Activated naive CD4-positive, alpha-beta T cell treated with anti-CD3 and anti-CD28 coated beads for 36 hours (primary cell): ENCODE measurements at regions of chr16 and their contacts with region 1.

Region 1: DNA sequence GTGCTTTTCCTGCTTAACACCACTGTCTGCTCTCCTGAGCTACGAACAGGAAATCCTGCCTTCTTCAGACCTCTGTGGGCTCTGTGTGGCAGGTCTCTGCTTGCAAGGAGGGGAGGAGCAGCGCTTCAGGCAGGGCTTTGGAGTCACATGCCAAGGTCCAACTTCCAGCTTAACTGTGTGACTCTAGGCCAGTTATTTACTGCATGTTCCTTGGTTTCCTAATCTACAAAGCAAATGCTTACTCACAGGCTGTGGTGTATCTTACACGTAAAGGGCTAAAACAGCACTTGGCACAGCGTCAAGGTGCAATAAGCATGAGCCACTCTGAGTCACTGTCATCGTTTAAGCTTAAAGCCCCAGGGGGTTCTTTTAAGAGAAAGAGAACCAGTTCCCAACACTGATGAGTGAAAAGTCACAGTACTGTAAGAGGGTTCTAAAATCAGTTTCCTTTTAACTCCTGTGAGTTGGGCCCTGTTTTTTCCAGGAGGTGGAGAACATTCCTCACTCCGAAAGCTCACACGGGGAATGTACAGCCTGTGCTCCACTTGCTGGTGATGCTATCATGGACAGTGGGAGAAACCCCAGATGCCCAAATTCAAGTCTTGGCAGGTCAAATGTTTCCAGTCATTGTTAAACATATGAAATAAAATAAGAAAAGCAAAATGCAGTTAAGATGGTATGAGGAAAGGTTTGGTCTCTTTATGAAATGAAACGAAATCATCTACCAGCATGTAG is 54.1 kb upstream of the BCAR1 start:
- DNase-seq: peak; percentile 94
- H3K4me3 Mint-ChIP-seq: peak overlapping the region; percentile 36
- H3K27ac Mint-ChIP-seq: peak overlapping the region; percentile 90
- H3K4me1 Mint-ChIP-seq: peaks cover 29% of the 10 kb centered on the region
- H3K27me3 Mint-ChIP-seq: no peaks in the 10 kb centered on the region

Region 2: DNA sequence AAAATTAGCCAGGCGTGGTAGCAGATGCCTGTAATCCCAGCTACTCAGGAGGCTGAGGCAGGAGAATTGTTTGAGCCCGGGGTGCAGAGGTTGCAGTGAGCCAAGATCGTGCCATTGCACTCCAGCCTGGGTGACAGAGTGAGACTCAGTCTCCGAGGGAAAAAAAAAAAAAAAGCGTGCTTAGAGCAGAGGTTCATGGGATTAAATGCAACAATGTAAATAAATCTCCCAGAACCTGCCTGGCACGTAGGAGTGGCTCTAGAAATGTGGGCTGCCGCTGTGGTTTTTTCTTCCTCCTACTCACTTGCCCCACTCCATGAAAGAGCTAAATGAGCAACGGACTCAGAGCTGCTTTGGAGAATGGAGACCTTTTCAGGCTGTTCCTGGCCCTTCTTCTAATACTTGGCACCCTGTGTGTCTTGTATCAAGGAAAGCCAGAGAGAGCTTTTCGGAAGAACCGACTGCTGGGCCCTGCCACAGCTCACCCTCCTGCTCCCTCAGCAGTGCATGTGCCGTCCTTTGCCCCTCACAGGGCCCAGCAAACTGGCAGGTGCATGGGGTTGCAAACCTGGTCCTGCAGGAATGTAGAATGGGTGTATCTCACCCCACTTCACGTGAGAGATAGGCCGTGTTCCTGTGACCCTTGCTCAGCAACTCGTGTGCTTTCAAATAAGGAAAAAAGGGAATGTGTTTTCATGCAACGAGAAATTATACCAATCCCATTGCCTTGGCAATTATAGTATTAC is 241.0 kb before region 1 on chr16:
- CTCF ChIA-PET with region 1: no interaction called
- intact Hi-C with region 1: no loop called
- DNase-seq: peak; percentile 65
- H3K4me3 Mint-ChIP-seq: peak overlapping the region; percentile 54
- H3K27ac Mint-ChIP-seq: no peak overlapping the region
- H3K4me1 Mint-ChIP-seq: peaks cover 25% of the 10 kb centered on the region
- H3K27me3 Mint-ChIP-seq: no peaks in the 10 kb centered on the region

Region 3: GRCh38 chr16:75148311-75149195 is 157.0 kb before region 1 on chr16 and contains the start of gene ZFP1:
- CTCF ChIA-PET with region 1: no interaction called
- intact Hi-C with region 1: loop called (anchors 1 kb)
- DNase-seq: peak; percentile 97
- H3K4me3 Mint-ChIP-seq: peak within 1 kb of the TSS; percentile 80
- H3K27ac Mint-ChIP-seq: peak within 1 kb of the TSS; percentile 73
- H3K4me1 Mint-ChIP-seq: peaks cover 37% of the 10 kb centered on the region
- H3K27me3 Mint-ChIP-seq: no peaks in the 10 kb centered on the region
- total RNA-seq, gene ZFP1: 20.2 to 20.9 TPM

Region 4: DNA sequence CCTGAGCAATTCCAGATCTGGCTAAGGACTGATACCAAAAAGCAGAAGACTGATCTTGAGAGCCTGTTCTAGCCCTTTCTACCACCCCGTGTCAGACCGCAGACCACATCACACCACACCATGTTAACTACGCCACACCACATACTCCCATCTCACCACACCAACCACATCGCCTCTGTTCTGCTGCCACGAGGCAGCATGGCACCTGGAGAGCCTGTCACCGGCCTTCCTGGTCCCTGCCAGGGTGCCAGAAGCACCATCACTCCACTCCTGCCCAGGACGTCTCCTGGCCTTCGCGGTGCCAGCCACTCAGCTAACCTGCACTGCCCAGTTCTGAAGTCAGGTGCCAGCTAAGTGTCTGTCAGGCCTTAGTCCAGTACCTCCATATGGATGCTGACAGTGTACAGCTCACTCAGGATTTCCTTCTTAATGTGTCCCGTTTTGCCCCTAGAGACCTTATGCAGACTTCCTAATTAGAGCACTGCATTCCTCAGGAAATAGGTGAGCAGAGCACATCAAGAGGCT is 16.9 kb before region 1 on chr16:
- CTCF ChIA-PET with region 1: no interaction called
- intact Hi-C with region 1: loop called (anchors 1 kb)
- DNase-seq: peak; percentile 82
- H3K4me3 Mint-ChIP-seq: no peak overlapping the region
- H3K27ac Mint-ChIP-seq: no peak overlapping the region
- H3K4me1 Mint-ChIP-seq: peaks cover 17% of the 10 kb centered on the region
- H3K27me3 Mint-ChIP-seq: peaks cover 3% of the 10 kb centered on the region

Region 5: GRCh38 chr16:75402821-75403475 is 97.4 kb after region 1 on chr16:
- CTCF ChIA-PET with region 1: no interaction called
- intact Hi-C with region 1: loop called (anchors 1 kb)
- DNase-seq: no peak
- H3K4me3 Mint-ChIP-seq: no peak overlapping the region
- H3K27ac Mint-ChIP-seq: no peak overlapping the region
- H3K4me1 Mint-ChIP-seq: peaks cover 27% of the 10 kb centered on the region
- H3K27me3 Mint-ChIP-seq: no peaks in the 10 kb centered on the region

Region 6: GRCh38 chr16:75622761-75623605 is 317.5 kb after region 1 on chr16 and contains the start of gene ADAT1:
- CTCF ChIA-PET with region 1: no interaction called
- intact Hi-C with region 1: loop called (anchors 2 kb)
- DNase-seq: peak; percentile 99
- H3K4me3 Mint-ChIP-seq: peak within 1 kb of the TSS; percentile 95
- H3K27ac Mint-ChIP-seq: peak within 1 kb of the TSS; percentile 95
- H3K4me1 Mint-ChIP-seq: peaks cover 39% of the 10 kb centered on the region
- H3K27me3 Mint-ChIP-seq: no peaks in the 10 kb centered on the region
- total RNA-seq, gene ADAT1: 45.3 to 47.5 TPM

Region 7: DNA sequence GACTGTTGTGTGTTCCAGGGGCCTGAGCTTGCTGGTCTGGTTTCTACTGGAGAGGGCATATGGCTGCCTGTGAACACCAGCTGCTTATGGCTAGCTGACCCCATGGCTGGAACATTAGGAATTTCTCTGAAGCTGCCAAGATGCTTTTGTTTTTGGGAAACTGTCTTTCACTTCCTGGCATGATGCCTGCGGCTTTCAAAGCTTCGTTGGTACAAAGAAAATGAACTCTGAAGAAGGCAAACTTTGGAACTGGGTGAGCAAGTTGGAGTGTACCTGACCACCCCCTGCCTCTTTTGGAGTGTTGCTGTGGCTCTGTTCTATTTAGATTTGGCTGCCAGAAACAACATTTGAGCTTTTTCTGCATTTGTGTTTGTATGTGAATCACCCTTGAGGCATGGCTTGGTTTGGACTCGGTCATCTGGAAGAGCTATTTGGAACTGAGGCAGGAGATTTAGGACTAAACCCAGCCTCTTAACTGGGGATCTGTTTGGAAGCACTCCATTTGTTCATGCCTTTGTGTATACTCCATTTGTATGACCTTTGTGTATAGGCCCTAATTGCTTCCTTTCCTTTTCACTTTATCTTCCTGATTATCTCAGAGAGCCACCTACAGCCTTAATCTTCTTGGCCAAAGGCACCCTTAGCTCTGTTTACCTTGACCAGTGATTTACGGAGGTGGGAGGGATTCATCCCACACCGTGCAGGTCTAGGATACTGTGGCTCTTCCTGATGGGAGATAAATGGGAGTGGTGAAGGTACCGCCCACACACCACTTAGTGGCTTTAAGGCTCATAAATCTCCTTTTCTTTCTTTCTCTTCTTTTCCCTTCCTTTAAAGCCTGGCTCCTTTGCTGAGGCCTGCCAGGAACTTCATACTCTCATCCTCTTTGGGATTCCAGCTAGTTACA is 428.0 kb after region 1 on chr16:
- CTCF ChIA-PET with region 1: no interaction called
- intact Hi-C with region 1: no loop called
- DNase-seq: no peak
- H3K4me3 Mint-ChIP-seq: no peak overlapping the region
- H3K27ac Mint-ChIP-seq: no peak overlapping the region
- H3K4me1 Mint-ChIP-seq: no peaks in the 10 kb centered on the region
- H3K27me3 Mint-ChIP-seq: no peaks in the 10 kb centered on the region